ENCODE measurements at regions of chr9 and their contacts with region 1.

Region 1: DNA sequence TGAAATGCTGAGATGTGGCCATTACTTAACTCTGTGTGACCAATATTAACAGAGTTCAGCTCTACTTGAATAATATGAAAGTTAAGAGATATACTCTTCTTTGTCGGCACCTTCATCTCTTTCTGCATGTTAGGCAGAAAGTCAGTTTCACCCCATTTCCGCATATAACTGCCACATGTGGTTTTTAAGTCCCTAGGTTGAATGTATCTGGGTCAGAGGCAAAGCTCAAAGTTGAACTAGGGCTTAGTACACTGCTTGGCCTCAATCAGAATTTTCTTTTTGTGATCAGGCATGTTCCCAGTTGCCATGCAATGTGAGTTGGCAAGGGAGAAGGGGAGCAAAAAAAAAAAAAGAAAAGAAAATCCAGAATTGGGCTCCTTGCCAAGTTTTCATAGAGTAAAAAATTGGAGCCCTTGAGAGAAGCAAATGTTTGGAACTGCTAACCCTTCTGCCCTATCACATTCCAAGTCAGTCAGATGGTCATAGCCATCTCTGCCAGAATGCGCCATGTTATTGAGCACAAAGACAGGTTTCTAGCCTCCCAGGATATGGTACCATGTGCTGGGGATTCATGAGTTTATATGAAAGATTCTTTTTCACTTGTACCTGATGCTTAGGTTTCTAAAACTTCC is 251.2 kb upstream of the RORB start:
- DNase-seq: peak in 1 of 2 donors; percentile 65
- ATAC-seq: peak; percentile 85 to 97 (median 97)
- H3K4me3 ChIP-seq: no peak overlapping the region
- H3K4me3 Mint-ChIP-seq: peak overlapping the region; percentile 70
- H3K27ac ChIP-seq: peak overlapping the region; percentile 85
- H3K27ac Mint-ChIP-seq: peak overlapping the region; percentile 87 to 91
- H3K4me1 ChIP-seq: peaks cover 8% of the 10 kb centered on the region
- H3K4me1 Mint-ChIP-seq: peaks cover 27 to 47% of the 10 kb centered on the region in 2 donors
- H3K27me3 ChIP-seq: no peaks in the 10 kb centered on the region
- H3K27me3 Mint-ChIP-seq: no peaks in the 10 kb centered on the region
- CTCF ChIP-seq: no peak

Region 2: GRCh38 chr9:74277532-74277931 is 31.6 kb after region 1 on chr9:
- intact Hi-C with region 1: loop called (anchors 1 kb)
- DNase-seq: peak; percentile 51 to 72
- ATAC-seq: peak; percentile 90 to 97 (median 95)
- H3K4me3 ChIP-seq: no peak overlapping the region
- H3K4me3 Mint-ChIP-seq: no peak overlapping the region
- H3K27ac ChIP-seq: peak overlapping the region; percentile 25
- H3K27ac Mint-ChIP-seq: peak overlapping the region; percentile 29 to 80
- H3K4me1 ChIP-seq: peaks cover 10% of the 10 kb centered on the region
- H3K4me1 Mint-ChIP-seq: peaks cover 8 to 23% of the 10 kb centered on the region in 2 donors
- H3K27me3 ChIP-seq: no peaks in the 10 kb centered on the region
- H3K27me3 Mint-ChIP-seq: no peaks in the 10 kb centered on the region
- CTCF ChIP-seq: peak; percentile 26

Region 3: GRCh38 chr9:74333384-74334032 is 87.5 kb after region 1 on chr9:
- intact Hi-C with region 1: loop called (anchors 5 kb)
- DNase-seq: peak in 1 of 2 donors; percentile 7
- ATAC-seq: peak; percentile 12 to 42 (median 27)
- H3K4me3 ChIP-seq: no peak overlapping the region
- H3K4me3 Mint-ChIP-seq: no peak overlapping the region
- H3K27ac ChIP-seq: no peak overlapping the region
- H3K27ac Mint-ChIP-seq: peak overlapping the region in 1 of 2 donors; percentile 66
- H3K4me1 ChIP-seq: no peaks in the 10 kb centered on the region
- H3K4me1 Mint-ChIP-seq: peaks cover 22 to 25% of the 10 kb centered on the region in 2 donors
- H3K27me3 ChIP-seq: no peaks in the 10 kb centered on the region
- H3K27me3 Mint-ChIP-seq: no peaks in the 10 kb centered on the region
- CTCF ChIP-seq: no peak

Measured in natural killer cell (primary cell).